ENCODE measurements at regions of chr16 and their contacts with region 1.

Region 1: DNA sequence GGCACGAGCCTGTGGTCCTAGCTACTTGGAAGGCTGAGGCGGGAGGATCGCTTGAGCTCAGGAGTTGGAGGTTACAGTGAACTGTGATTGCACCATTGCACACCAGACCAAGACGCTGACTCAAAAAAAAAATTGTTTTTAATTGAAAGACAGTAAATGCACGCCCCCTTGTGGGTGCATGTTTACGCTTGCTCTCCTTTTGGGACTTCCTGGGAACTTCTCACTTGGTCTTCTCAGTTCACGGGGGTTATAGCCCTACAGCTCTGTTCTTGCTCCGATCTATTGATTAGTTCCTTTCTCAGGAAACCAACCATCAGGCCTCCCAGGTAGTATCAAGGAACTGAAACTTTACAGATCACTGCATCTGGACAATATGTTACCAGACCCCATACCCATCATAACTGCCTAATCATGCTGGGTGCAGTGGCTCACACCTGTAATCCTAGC is 14.2 kb upstream of the RIPOR1 start:
- DNase-seq: peak; percentile 69
- ATAC-seq: peak; percentile 84
- H3K4me3 ChIP-seq: no peak overlapping the region; a peak in 1 of 4 replicates
- H3K27ac ChIP-seq: no peak overlapping the region
- H3K4me1 ChIP-seq: peaks cover 0 to 18% of the 10 kb centered on the region in 2 experiments; a peak in 3 of 4 replicates
- H3K27me3 ChIP-seq: no peaks in the 10 kb centered on the region
- CTCF ChIP-seq: peak; percentile 66 to 89 (median 77)
- POLR2A ChIP-seq: no peak
- RAD21 ChIP-seq: peak; percentile 77

Region 2: GRCh38 chr16:67480833-67481560 is 33.4 kb before region 1 on chr16 and contains the start of gene ATP6V0D1:
- CTCF ChIA-PET with region 1: interaction called, 25 read pairs
- POLR2A ChIA-PET with region 1: interaction called, 3 read pairs
- RAD21 ChIA-PET with region 1: interaction called in 1 of 2 experiments, 9 read pairs
- intact Hi-C with region 1: loop called (anchors 1 kb)
- DNase-seq: peak; percentile 94
- ATAC-seq: peak; percentile 91
- H3K4me3 ChIP-seq: peak within 1 kb of the TSS; percentile 93 to 94
- H3K27ac ChIP-seq: peak within 1 kb of the TSS; percentile 51
- H3K4me1 ChIP-seq: peaks cover 12 to 20% of the 10 kb centered on the region in 2 experiments
- H3K27me3 ChIP-seq: no peaks in the 10 kb centered on the region
- CTCF ChIP-seq: peak; percentile 77 to 88 (median 86)
- POLR2A ChIP-seq: no peak
- RAD21 ChIP-seq: peak; percentile 72
- total RNA-seq, gene ATP6V0D1: 36.6 TPM

Region 3: GRCh38 chr16:67499106-67499505 is 15.3 kb before region 1 on chr16:
- CTCF ChIA-PET with region 1: interaction called, 40 read pairs
- POLR2A ChIA-PET with region 1: no interaction called
- RAD21 ChIA-PET with region 1: interaction called, 4 to 8 read pairs
- intact Hi-C with region 1: loop called (anchors 1 kb)
- DNase-seq: no peak
- ATAC-seq: no peak
- H3K4me3 ChIP-seq: no peak overlapping the region
- H3K27ac ChIP-seq: no peak overlapping the region
- H3K4me1 ChIP-seq: peaks cover 0 to 2% of the 10 kb centered on the region in 2 experiments; a peak in 1 of 4 replicates
- H3K27me3 ChIP-seq: no peaks in the 10 kb centered on the region
- CTCF ChIP-seq: no peak
- POLR2A ChIP-seq: no peak
- RAD21 ChIP-seq: no peak

Region 4: DNA sequence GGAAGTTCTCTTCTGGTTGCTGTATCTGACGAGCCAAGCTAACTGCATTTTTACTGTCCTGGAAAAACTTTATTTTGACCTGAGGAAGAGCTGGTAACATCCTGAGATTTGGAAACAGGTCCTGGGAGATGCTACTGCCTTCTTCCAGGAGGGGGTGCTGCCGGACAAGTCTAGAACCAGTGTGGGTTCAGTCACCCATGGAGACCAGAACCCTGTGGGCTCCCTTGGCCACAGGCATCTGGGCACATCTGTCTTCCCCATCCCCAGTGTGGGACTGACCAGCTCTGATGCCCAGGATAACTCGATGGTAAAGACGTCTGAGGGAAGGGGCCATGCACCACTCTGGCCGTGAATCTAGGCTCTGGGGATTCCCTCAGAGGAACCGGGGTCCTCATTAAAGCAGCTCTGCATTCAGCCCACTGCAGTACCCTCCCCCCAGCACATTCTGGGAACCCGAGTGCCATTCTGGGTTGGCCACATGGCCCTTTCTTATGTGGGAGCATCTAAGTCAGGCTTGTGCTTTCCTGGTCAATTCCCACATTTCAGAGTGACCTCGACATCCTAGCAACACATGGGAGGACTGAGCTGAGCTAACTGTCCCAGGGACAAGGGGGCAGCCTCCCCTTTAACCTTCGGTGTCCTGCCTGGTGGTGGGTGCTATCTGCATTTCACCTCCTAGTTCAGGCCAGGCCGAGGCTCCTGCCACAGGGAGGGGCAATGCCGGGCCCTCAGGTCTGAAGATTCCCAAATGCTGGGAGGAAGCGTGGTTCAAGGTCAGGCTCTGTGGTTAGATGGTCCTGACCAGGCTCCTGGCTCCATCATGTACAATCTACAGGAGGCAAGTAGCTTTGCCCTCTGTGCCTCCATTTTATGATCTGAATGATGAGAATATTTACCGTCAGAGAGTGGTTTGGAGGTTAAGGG is 158.6 kb after region 1 on chr16:
- CTCF ChIA-PET with region 1: no interaction called
- POLR2A ChIA-PET with region 1: no interaction called
- RAD21 ChIA-PET with region 1: no interaction called
- intact Hi-C with region 1: no loop called
- DNase-seq: peak; percentile 42
- ATAC-seq: peak; percentile 63
- H3K4me3 ChIP-seq: no peak overlapping the region
- H3K27ac ChIP-seq: no peak overlapping the region
- H3K4me1 ChIP-seq: peaks cover 0 to 10% of the 10 kb centered on the region in 2 experiments; a peak in 2 of 4 replicates
- H3K27me3 ChIP-seq: no peaks in the 10 kb centered on the region
- CTCF ChIP-seq: peak; percentile 78 to 92 (median 90); a peak in 5 of 6 replicates
- POLR2A ChIP-seq: no peak
- RAD21 ChIP-seq: peak; percentile 93

Measured in HCT116 (cell line).